HCT116 (cell line): ENCODE measurements at regions of chr2 and their contacts with region 1.

Region 1: GRCh38 chr2:12716282-12717190 is at the start of gene TRIB2:
- DNase-seq: peak; percentile 61
- ATAC-seq: peak; percentile 85
- H3K4me3 ChIP-seq: peak within 1 kb of the TSS; percentile 66 to 78
- H3K27ac ChIP-seq: peak within 1 kb of the TSS; percentile 70
- H3K4me1 ChIP-seq: peaks cover 18 to 29% of the 10 kb centered on the region in 2 experiments
- H3K27me3 ChIP-seq: no peaks in the 10 kb centered on the region
- CTCF ChIP-seq: no peak
- POLR2A ChIP-seq: no peak
- RAD21 ChIP-seq: peak; percentile 38; the same call in 1 of the 2 replicates
- total RNA-seq, gene TRIB2: 12.4 TPM

Region 2: GRCh38 chr2:11829947-11830707 is 886.4 kb before region 1 on chr2:
- CTCF ChIA-PET with region 1: interaction called, 29 read pairs
- POLR2A ChIA-PET with region 1: interaction called, 6 read pairs
- RAD21 ChIA-PET with region 1: interaction called in 1 of 2 experiments, 4 read pairs
- intact Hi-C with region 1: loop called (anchors 1 kb)
- DNase-seq: peak; percentile 90
- ATAC-seq: peak; percentile 95
- H3K4me3 ChIP-seq: peak overlapping the region; percentile 33 to 50
- H3K27ac ChIP-seq: peak overlapping the region; percentile 96
- H3K4me1 ChIP-seq: peaks cover 27 to 31% of the 10 kb centered on the region in 2 experiments
- H3K27me3 ChIP-seq: no peaks in the 10 kb centered on the region
- CTCF ChIP-seq: peak; percentile 42 to 62 (median 57); a peak in 5 of 6 replicates
- POLR2A ChIP-seq: peak; percentile 35
- RAD21 ChIP-seq: peak; percentile 90

Region 3: GRCh38 chr2:11863513-11864328 is 852.8 kb before region 1 on chr2:
- CTCF ChIA-PET with region 1: interaction called, 10 read pairs
- POLR2A ChIA-PET with region 1: no interaction called
- RAD21 ChIA-PET with region 1: no interaction called
- intact Hi-C with region 1: loop called (anchors 2 kb)
- DNase-seq: peak; percentile 71
- ATAC-seq: peak; percentile 98
- H3K4me3 ChIP-seq: no peak overlapping the region
- H3K27ac ChIP-seq: no peak overlapping the region
- H3K4me1 ChIP-seq: peaks cover 0 to 11% of the 10 kb centered on the region in 2 experiments; a peak in 2 of 4 replicates
- H3K27me3 ChIP-seq: no peaks in the 10 kb centered on the region
- CTCF ChIP-seq: peak; percentile 63 to 97 (median 94); a peak in 5 of 6 replicates
- POLR2A ChIP-seq: no peak
- RAD21 ChIP-seq: peak; percentile 89

Region 4: GRCh38 chr2:12176623-12177454 is 539.7 kb before region 1 on chr2:
- CTCF ChIA-PET with region 1: no interaction called
- POLR2A ChIA-PET with region 1: no interaction called
- RAD21 ChIA-PET with region 1: interaction called in 1 of 2 experiments, 4 read pairs
- intact Hi-C with region 1: loop called (anchors 10 kb)
- DNase-seq: no peak
- ATAC-seq: peak; percentile 85
- H3K4me3 ChIP-seq: no peak overlapping the region
- H3K27ac ChIP-seq: no peak overlapping the region
- H3K4me1 ChIP-seq: peaks cover 11 to 12% of the 10 kb centered on the region in 2 experiments; a peak in 3 of 4 replicates
- H3K27me3 ChIP-seq: no peaks in the 10 kb centered on the region
- CTCF ChIP-seq: no peak
- POLR2A ChIP-seq: no peak
- RAD21 ChIP-seq: no peak

Region 5: DNA sequence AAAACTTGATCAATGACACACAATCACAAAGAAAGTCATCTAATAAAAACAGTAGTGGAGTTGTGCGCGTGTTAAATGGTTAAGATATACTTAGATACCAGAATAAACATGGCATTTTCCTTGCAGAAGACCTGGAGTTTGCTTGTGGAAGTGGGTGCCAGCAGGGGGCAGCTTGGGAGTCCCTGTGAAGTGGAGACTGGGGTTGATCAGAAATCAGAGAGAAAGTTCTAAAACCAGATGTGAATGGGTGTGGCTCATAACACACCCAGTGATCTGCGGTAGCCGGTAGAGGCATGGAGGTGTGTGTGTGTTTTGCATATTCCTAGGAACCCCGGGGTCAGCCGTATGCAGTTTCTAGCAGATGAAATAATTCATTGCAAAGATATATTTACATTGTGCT is 299.9 kb before region 1 on chr2:
- CTCF ChIA-PET with region 1: interaction called, 3 read pairs
- POLR2A ChIA-PET with region 1: no interaction called
- RAD21 ChIA-PET with region 1: interaction called in 1 of 2 experiments, 3 read pairs
- intact Hi-C with region 1: loop called (anchors 1 kb)
- DNase-seq: no peak
- ATAC-seq: peak; percentile 65
- H3K4me3 ChIP-seq: no peak overlapping the region
- H3K27ac ChIP-seq: no peak overlapping the region
- H3K4me1 ChIP-seq: no peaks in the 10 kb centered on the region
- H3K27me3 ChIP-seq: no peaks in the 10 kb centered on the region
- CTCF ChIP-seq: peak; percentile 35 to 44 (median 44); a peak in 4 of 6 replicates
- POLR2A ChIP-seq: no peak
- RAD21 ChIP-seq: peak; percentile 59

Region 6: GRCh38 chr2:12430407-12431133 is 286.0 kb before region 1 on chr2:
- CTCF ChIA-PET with region 1: interaction called, 14 read pairs
- POLR2A ChIA-PET with region 1: interaction called, 8 read pairs
- RAD21 ChIA-PET with region 1: no interaction called
- intact Hi-C with region 1: loop called (anchors 5 kb)
- DNase-seq: no peak
- ATAC-seq: no peak
- H3K4me3 ChIP-seq: no peak overlapping the region
- H3K27ac ChIP-seq: no peak overlapping the region
- H3K4me1 ChIP-seq: no peaks in the 10 kb centered on the region
- H3K27me3 ChIP-seq: no peaks in the 10 kb centered on the region
- CTCF ChIP-seq: no peak
- POLR2A ChIP-seq: no peak
- RAD21 ChIP-seq: no peak

Region 7: GRCh38 chr2:12931186-12931844 is 214.8 kb after region 1 on chr2:
- CTCF ChIA-PET with region 1: interaction called, 7 read pairs
- POLR2A ChIA-PET with region 1: no interaction called
- RAD21 ChIA-PET with region 1: interaction called in 1 of 2 experiments, 3 read pairs
- intact Hi-C with region 1: loop called (anchors 5 kb)
- DNase-seq: peak; percentile 28
- ATAC-seq: peak; percentile 95
- H3K4me3 ChIP-seq: no peak overlapping the region
- H3K27ac ChIP-seq: no peak overlapping the region
- H3K4me1 ChIP-seq: peaks cover 0 to 8% of the 10 kb centered on the region in 2 experiments; a peak in 2 of 4 replicates
- H3K27me3 ChIP-seq: no peaks in the 10 kb centered on the region
- CTCF ChIP-seq: peak; percentile 55 to 74 (median 72); a peak in 5 of 6 replicates
- POLR2A ChIP-seq: no peak
- RAD21 ChIP-seq: peak; percentile 76

Region 8: DNA sequence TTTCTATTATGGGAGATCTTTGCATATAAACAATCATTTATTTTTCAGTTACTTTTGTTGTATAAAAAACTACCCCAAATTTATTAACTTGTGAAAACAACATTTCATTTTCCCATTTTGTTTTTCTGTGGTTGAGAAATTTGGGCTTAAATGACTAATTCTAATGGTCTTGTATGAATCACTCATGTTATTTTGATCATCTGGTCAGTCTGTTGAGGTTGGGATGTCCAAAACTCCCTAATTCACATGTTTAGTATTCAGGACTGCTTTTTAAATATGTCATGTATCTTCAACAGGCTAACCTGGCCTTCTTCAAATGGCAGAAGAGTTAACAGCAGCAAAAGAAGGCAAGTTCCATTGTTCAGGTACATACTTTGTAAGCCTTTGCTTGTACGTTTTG is 788.3 kb after region 1 on chr2:
- CTCF ChIA-PET with region 1: no interaction called
- POLR2A ChIA-PET with region 1: no interaction called
- RAD21 ChIA-PET with region 1: no interaction called
- intact Hi-C with region 1: no loop called
- DNase-seq: no peak
- ATAC-seq: no peak
- H3K4me3 ChIP-seq: no peak overlapping the region
- H3K27ac ChIP-seq: no peak overlapping the region
- H3K4me1 ChIP-seq: no peaks in the 10 kb centered on the region
- H3K27me3 ChIP-seq: no peaks in the 10 kb centered on the region
- CTCF ChIP-seq: no peak
- POLR2A ChIP-seq: no peak
- RAD21 ChIP-seq: no peak